ENCODE measurements at regions of chr1 and their contacts with region 1.

Region 1: GRCh38 chr1:203769505-203770343 is 4.7 kb downstream of the LAX1 start:
- DNase-seq: peak in 3 of 14 experiments; percentile 11 to 66 (median 60)
- ATAC-seq: no peak
- H3K4me3 ChIP-seq: no peak overlapping the region
- H3K4me3 Mint-ChIP-seq: peak overlapping the region; percentile 62
- H3K27ac ChIP-seq: no peak overlapping the region
- H3K27ac Mint-ChIP-seq: peak overlapping the region; percentile 79
- H3K4me1 ChIP-seq: peaks cover 32% of the 10 kb centered on the region
- H3K4me1 Mint-ChIP-seq: peaks cover 51% of the 10 kb centered on the region
- H3K27me3 ChIP-seq: no peaks in the 10 kb centered on the region
- H3K27me3 Mint-ChIP-seq: no peaks in the 10 kb centered on the region
- CTCF ChIP-seq: no peak

Region 2: DNA sequence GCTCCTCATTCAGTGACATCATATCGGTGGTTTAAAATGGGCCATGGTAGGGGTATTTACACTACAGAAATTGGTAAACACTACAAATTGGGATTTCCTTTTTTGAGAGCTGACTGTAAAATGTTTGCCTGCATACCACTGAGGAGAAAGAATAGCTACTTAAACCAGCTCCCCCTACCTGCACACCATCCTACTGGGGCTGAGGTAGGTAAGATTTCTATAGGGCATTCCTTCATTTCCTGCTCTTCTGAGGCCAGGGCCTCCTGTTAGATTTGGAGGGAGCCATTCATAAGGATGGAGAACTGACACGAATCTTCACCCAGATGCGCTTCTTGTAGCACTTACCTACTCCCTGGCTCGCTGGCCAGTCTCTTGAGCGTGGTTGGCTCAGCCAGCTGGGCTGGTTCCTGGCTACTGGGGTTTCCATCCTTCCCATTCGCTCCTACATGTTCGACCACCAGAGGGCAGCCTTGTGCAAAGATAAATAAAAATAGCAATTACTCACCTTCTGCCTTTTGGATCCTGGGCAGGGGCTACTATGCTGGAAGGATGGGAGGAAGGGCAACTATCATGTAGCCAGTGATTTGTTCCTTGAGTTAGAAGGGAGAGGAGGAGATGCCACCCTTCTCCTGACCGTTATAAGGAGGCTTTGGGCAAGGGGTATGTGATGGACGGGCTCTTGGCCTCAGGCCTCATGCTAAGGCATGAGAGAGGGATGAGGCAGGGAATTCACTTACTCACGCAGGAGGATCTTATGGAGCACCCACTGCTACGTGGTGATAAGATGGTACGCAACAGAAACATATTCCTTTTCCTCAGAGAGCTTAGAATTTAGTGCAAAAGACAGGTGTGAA is 265.1 kb before region 1 on chr1:
- CTCF ChIA-PET with region 1: no interaction called
- POLR2A ChIA-PET with region 1: no interaction called
- intact Hi-C with region 1: loop called in 1 of 2 experiments (anchors 5 kb)
- DNase-seq: peak; percentile 50 to 89 (median 72)
- ATAC-seq: peak; percentile 65
- H3K4me3 ChIP-seq: no peak overlapping the region
- H3K4me3 Mint-ChIP-seq: no peak overlapping the region
- H3K27ac ChIP-seq: no peak overlapping the region
- H3K27ac Mint-ChIP-seq: no peak overlapping the region
- H3K4me1 ChIP-seq: peaks cover 5% of the 10 kb centered on the region
- H3K4me1 Mint-ChIP-seq: peaks cover 6% of the 10 kb centered on the region
- H3K27me3 ChIP-seq: no peaks in the 10 kb centered on the region
- H3K27me3 Mint-ChIP-seq: no peaks in the 10 kb centered on the region
- CTCF ChIP-seq: peak; percentile 81

Region 3: GRCh38 chr1:203673550-203674427 is 95.9 kb before region 1 on chr1:
- CTCF ChIA-PET with region 1: interaction called, 5 read pairs
- POLR2A ChIA-PET with region 1: interaction called, 5 read pairs
- intact Hi-C with region 1: loop called in 1 of 2 experiments (anchors 10 kb)
- DNase-seq: peak; percentile 50 to 94 (median 60)
- ATAC-seq: peak; percentile 87
- H3K4me3 ChIP-seq: peak overlapping the region; percentile 8
- H3K4me3 Mint-ChIP-seq: peak overlapping the region; percentile 82
- H3K27ac ChIP-seq: peak overlapping the region; percentile 59 to 74
- H3K27ac Mint-ChIP-seq: peak overlapping the region; percentile 93
- H3K4me1 ChIP-seq: peaks cover 86% of the 10 kb centered on the region
- H3K4me1 Mint-ChIP-seq: peaks cover 85% of the 10 kb centered on the region
- H3K27me3 ChIP-seq: no peaks in the 10 kb centered on the region
- H3K27me3 Mint-ChIP-seq: no peaks in the 10 kb centered on the region
- CTCF ChIP-seq: peak; percentile 64

Region 4: GRCh38 chr1:203733009-203733863 is 36.5 kb before region 1 on chr1:
- CTCF ChIA-PET with region 1: interaction called, 3 read pairs
- POLR2A ChIA-PET with region 1: interaction called, 6 read pairs
- intact Hi-C with region 1: loop called in 1 of 2 experiments (anchors 5 kb)
- DNase-seq: no peak
- ATAC-seq: no peak
- H3K4me3 ChIP-seq: no peak overlapping the region
- H3K4me3 Mint-ChIP-seq: no peak overlapping the region
- H3K27ac ChIP-seq: no peak overlapping the region
- H3K27ac Mint-ChIP-seq: peak overlapping the region; percentile 29
- H3K4me1 ChIP-seq: no peaks in the 10 kb centered on the region
- H3K4me1 Mint-ChIP-seq: no peaks in the 10 kb centered on the region
- H3K27me3 ChIP-seq: no peaks in the 10 kb centered on the region
- H3K27me3 Mint-ChIP-seq: no peaks in the 10 kb centered on the region
- CTCF ChIP-seq: no peak

Region 5: GRCh38 chr1:203751051-203751450 is 18.7 kb before region 1 on chr1:
- CTCF ChIA-PET with region 1: interaction called, 10 read pairs
- POLR2A ChIA-PET with region 1: interaction called, 15 read pairs
- intact Hi-C with region 1: no loop called
- DNase-seq: no peak
- ATAC-seq: no peak
- H3K4me3 ChIP-seq: no peak overlapping the region
- H3K4me3 Mint-ChIP-seq: no peak overlapping the region
- H3K27ac ChIP-seq: no peak overlapping the region
- H3K27ac Mint-ChIP-seq: no peak overlapping the region
- H3K4me1 ChIP-seq: peaks cover 25% of the 10 kb centered on the region
- H3K4me1 Mint-ChIP-seq: peaks cover 17% of the 10 kb centered on the region
- H3K27me3 ChIP-seq: no peaks in the 10 kb centered on the region
- H3K27me3 Mint-ChIP-seq: no peaks in the 10 kb centered on the region
- CTCF ChIP-seq: no peak

Region 6: GRCh38 chr1:204398217-204399081 is 628.7 kb after region 1 on chr1:
- CTCF ChIA-PET with region 1: no interaction called
- POLR2A ChIA-PET with region 1: no interaction called
- intact Hi-C with region 1: loop called in 1 of 2 experiments (anchors 10 kb)
- DNase-seq: peak in 11 of 14 experiments; percentile 26 to 86 (median 47)
- ATAC-seq: peak; percentile 96
- H3K4me3 ChIP-seq: no peak overlapping the region
- H3K4me3 Mint-ChIP-seq: no peak overlapping the region
- H3K27ac ChIP-seq: peak overlapping the region in 1 of 2 donors; percentile 18
- H3K27ac Mint-ChIP-seq: peak overlapping the region; percentile 82
- H3K4me1 ChIP-seq: peaks cover 9% of the 10 kb centered on the region
- H3K4me1 Mint-ChIP-seq: peaks cover 18% of the 10 kb centered on the region
- H3K27me3 ChIP-seq: no peaks in the 10 kb centered on the region
- H3K27me3 Mint-ChIP-seq: no peaks in the 10 kb centered on the region
- CTCF ChIP-seq: peak; percentile 85

Region 7: GRCh38 chr1:204591594-204592051 is 821.9 kb after region 1 on chr1:
- CTCF ChIA-PET with region 1: no interaction called
- POLR2A ChIA-PET with region 1: no interaction called
- intact Hi-C with region 1: no loop called
- DNase-seq: no peak
- ATAC-seq: no peak
- H3K4me3 ChIP-seq: no peak overlapping the region
- H3K4me3 Mint-ChIP-seq: no peak overlapping the region
- H3K27ac ChIP-seq: no peak overlapping the region
- H3K27ac Mint-ChIP-seq: no peak overlapping the region
- H3K4me1 ChIP-seq: no peaks in the 10 kb centered on the region
- H3K4me1 Mint-ChIP-seq: no peaks in the 10 kb centered on the region
- H3K27me3 ChIP-seq: no peaks in the 10 kb centered on the region
- H3K27me3 Mint-ChIP-seq: no peaks in the 10 kb centered on the region
- CTCF ChIP-seq: no peak

Measured in CD4-positive, alpha-beta T cell (primary cell).